Ascending aorta (tissue), 2 donors: ENCODE measurements at regions of chr9 and their contacts with region 1.

Region 1: DNA sequence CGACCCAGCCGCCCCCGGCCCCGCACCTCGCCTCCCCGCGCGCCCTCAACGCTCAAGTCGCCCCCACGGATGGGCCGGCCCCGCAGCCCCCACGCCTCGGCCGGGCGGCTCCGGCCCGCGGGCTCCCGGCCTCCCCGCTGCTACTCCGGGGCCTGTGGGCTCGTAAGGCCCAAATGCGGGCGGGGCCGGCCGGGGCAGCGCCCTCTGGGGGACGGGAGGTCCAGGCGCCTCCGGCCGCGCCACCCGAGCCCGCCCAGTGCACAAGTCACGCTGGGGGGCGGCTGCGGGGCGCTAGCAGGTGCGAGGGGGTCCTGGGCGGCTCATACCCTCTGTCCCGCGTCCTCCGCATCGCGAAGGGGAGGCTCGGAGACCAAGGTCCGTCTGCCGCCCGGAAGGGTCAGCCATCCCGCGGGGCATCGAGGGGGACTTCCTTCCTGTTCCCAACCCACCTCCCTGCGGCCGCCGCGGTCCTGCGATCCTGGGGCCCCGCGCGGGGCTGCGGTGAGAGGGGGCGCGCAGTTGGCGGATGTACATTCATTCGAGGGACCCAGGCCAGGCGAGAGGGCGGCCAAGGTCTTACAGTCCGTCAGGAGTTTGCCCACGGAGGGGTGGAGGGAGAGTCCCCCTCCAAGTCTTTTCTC is at the start of gene CIZ1:
- DNase-seq: peak in 1 of 2 donors; percentile 89
- H3K4me3 ChIP-seq: peak within 1 kb of the TSS; percentile 69 to 97
- H3K27ac ChIP-seq: peak within 1 kb of the TSS; percentile 77
- H3K4me1 ChIP-seq: peaks cover 0 to 13% of the 10 kb centered on the region in 2 donors
- H3K27me3 ChIP-seq: no peaks in the 10 kb centered on the region
- CTCF ChIP-seq: peak; percentile 76 to 81 (median 78)
- total RNA-seq, gene CIZ1: 85.8 TPM

Region 2: DNA sequence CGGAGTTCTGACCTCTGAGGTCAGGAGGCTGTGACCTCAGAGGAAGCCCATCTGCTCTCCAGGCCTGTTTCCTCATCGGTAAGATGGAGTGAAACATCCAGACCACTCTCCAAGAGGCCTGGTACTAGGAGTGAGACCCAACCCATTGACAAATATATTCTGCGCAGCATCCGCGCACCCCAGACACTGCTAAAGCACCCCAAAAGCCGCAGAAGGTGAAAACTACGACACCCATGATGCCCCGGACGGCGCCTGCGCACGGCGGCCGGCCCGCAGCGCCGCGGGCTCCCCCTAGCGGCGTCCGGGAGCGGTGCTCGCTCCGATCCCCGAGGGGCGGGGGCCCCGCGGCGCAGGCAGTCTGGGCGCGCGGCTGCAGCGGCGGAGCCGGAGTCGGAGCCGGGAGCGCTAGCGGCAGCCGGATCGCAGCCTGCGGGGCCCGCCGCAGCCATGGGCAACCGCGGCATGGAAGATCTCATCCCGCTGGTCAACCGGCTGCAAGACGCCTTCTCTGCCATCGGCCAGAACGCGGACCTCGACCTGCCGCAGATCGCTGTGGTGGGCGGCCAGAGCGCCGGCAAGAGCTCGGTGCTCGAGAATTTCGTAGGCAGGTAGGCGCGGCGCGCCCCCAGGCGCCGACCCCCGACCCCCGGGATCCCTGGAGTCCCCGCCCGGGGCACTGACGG is 11.6 kb after region 1 on chr9 and contains the start of gene DNM1:
- intact Hi-C with region 1: loop called (anchors 1 kb)
- DNase-seq: no peak
- H3K4me3 ChIP-seq: peak within 1 kb of the TSS; percentile 68 to 72
- H3K27ac ChIP-seq: no peak within 1 kb of the TSS
- H3K4me1 ChIP-seq: peaks cover 9 to 12% of the 10 kb centered on the region in 2 donors
- H3K27me3 ChIP-seq: peaks cover 8% of the 10 kb centered on the region
- CTCF ChIP-seq: peak; percentile 44 to 98 (median 61)
- total RNA-seq, gene DNM1: 31.9 TPM